ENCODE measurements at regions of chr3 and their contacts with region 1.

Region 1: GRCh38 chr3:12613250-12613649 is 50.7 kb downstream of the RAF1 start:
- DNase-seq: no peak
- H3K4me3 ChIP-seq: no peak overlapping the region
- H3K4me3 Mint-ChIP-seq: no peak overlapping the region
- H3K27ac Mint-ChIP-seq: no peak overlapping the region
- H3K4me1 ChIP-seq: no peaks in the 10 kb centered on the region
- H3K4me1 Mint-ChIP-seq: no peaks in the 10 kb centered on the region
- H3K27me3 ChIP-seq: no peaks in the 10 kb centered on the region
- H3K27me3 Mint-ChIP-seq: no peaks in the 10 kb centered on the region
- CTCF ChIP-seq: no peak

Region 2: GRCh38 chr3:12719984-12720898 is 107.0 kb after region 1 on chr3:
- CTCF ChIA-PET with region 1: interaction called, 7 read pairs
- POLR2A ChIA-PET with region 1: no interaction called
- intact Hi-C with region 1: loop called (anchors 5 kb)
- DNase-seq: peak; percentile 83 to 88
- H3K4me3 ChIP-seq: peak overlapping the region; percentile 6
- H3K4me3 Mint-ChIP-seq: peak overlapping the region; percentile 53
- H3K27ac Mint-ChIP-seq: peak overlapping the region; percentile 57
- H3K4me1 ChIP-seq: peaks cover 4% of the 10 kb centered on the region; the same call in 1 of the 2 replicates
- H3K4me1 Mint-ChIP-seq: peaks cover 14% of the 10 kb centered on the region
- H3K27me3 ChIP-seq: no peaks in the 10 kb centered on the region
- H3K27me3 Mint-ChIP-seq: no peaks in the 10 kb centered on the region
- CTCF ChIP-seq: peak; percentile 79 to 93

Region 3: GRCh38 chr3:12750223-12750622 is 137.0 kb after region 1 on chr3:
- CTCF ChIA-PET with region 1: no interaction called
- POLR2A ChIA-PET with region 1: no interaction called
- intact Hi-C with region 1: no loop called
- DNase-seq: no peak
- H3K4me3 ChIP-seq: no peak overlapping the region
- H3K4me3 Mint-ChIP-seq: no peak overlapping the region
- H3K27ac Mint-ChIP-seq: no peak overlapping the region
- H3K4me1 ChIP-seq: no peaks in the 10 kb centered on the region
- H3K4me1 Mint-ChIP-seq: no peaks in the 10 kb centered on the region
- H3K27me3 ChIP-seq: no peaks in the 10 kb centered on the region
- H3K27me3 Mint-ChIP-seq: no peaks in the 10 kb centered on the region
- CTCF ChIP-seq: no peak